ENCODE measurements at regions of chr10 and their contacts with region 1.

Region 1: DNA sequence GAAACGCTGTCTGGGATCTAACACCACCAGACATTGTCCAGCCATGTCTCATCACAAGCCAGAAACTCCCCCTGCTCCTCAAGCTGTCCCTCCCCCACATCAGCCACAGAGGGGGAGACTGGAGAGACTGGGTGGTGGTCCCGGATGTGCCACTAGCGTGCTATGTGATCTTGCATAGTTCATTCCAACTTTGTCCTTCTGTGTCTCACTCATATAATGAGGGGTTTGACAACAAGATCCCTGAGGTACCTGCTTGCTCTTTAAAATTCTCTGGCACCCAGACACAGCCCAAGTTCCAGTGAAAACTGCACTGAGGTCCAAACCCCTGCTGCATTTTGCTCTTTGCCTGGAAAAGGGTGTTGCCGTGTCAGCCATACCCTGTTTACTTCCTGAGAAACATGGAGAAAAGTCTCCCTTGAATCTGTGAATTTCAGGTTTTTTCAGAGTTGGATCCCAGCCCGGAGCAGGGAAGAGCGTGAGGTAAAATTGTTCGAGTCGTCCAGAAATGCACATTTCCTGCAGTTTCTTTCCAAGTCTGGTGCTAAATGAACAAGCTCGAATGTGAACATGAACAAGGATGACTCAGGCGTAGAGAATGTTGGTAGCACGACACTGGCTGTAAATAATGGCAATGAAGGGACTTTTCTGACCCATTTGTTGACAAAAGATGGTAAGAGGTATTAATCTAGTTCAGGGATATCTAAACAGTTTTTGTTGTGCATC is 156.5 kb downstream of the CCDC3 start:
- DNase-seq: peak; percentile 98
- H3K4me3 ChIP-seq: peak overlapping the region in 1 of 3 experiments; percentile 12
- H3K27ac ChIP-seq: peak overlapping the region; percentile 96
- H3K4me1 ChIP-seq: peaks cover 31% of the 10 kb centered on the region
- H3K27me3 ChIP-seq: no peaks in the 10 kb centered on the region
- CTCF ChIP-seq: no peak
- POLR2A ChIP-seq: peak; percentile 56

Region 2: DNA sequence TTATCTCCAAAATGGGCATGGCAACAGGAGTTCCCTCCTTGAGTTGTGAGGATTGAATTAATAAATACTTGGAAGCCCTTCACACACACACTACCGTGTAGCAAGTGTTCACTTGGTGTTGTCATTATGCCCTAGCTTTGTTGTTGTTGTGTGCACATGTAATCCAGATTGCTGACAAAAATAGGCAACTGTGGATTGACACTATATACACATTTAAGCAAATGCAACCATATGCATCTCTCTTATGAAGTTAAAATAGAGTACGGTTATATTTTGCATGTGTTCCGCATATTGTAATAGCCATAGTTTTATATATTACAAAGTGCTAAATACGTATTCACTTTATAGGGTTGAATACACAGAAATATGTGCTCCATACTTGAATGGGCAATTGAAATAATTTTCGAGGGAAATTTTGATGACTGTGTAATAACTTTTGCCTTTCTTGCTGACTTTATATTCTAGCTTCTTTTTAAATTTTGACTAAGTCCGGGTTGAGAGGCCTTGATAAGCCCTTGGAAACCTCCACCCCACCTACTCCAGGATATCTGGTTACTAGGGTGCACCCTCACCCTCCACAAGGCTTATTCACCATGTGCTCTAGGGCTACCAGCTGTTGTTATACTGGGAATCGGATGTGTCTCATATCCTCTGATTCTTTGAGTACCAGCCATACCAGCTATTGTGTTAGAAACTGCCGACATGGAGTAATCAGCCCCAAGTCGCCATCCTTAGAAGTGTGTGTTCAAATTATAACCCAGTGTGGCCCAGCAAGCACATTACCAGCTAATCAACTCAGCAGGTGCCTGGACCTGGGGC is 230.6 kb before region 1 on chr10:
- CTCF ChIA-PET with region 1: no interaction called
- POLR2A ChIA-PET with region 1: no interaction called
- dilution Hi-C with region 1: no loop called
- intact Hi-C with region 1: loop called (anchors 1 kb)
- DNase-seq: peak; percentile 74
- H3K4me3 ChIP-seq: no peak overlapping the region
- H3K27ac ChIP-seq: peak overlapping the region; percentile 85
- H3K4me1 ChIP-seq: peaks cover 12% of the 10 kb centered on the region
- H3K27me3 ChIP-seq: no peaks in the 10 kb centered on the region
- CTCF ChIP-seq: no peak
- POLR2A ChIP-seq: no peak

Region 3: GRCh38 chr10:12720217-12720981 is 124.6 kb before region 1 on chr10:
- CTCF ChIA-PET with region 1: no interaction called
- POLR2A ChIA-PET with region 1: interaction called, 5 read pairs
- dilution Hi-C with region 1: no loop called
- intact Hi-C with region 1: loop called (anchors 1 kb)
- DNase-seq: peak; percentile 96
- H3K4me3 ChIP-seq: no peak overlapping the region
- H3K27ac ChIP-seq: peak overlapping the region; percentile 65
- H3K4me1 ChIP-seq: peaks cover 23% of the 10 kb centered on the region
- H3K27me3 ChIP-seq: no peaks in the 10 kb centered on the region
- CTCF ChIP-seq: no peak
- POLR2A ChIP-seq: peak; percentile 37

Region 4: DNA sequence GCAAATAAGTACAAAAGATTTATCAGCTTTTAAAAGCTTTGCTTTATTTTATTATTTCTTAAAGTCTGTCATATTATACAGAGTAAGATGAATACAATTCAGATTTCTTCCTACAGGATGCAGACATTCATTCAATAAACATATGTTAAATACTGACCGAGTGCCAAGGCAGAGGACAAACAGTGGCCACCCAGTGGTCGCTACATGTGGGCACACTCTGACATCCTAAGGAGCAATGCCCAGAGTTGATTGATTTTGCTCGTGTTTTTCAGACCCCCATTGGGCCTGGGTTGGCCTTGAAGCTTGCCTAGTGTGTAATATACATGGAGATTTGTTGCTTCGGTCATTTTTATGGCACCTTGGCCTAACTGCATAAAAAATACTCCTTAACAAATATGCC is 44.7 kb before region 1 on chr10:
- CTCF ChIA-PET with region 1: no interaction called
- POLR2A ChIA-PET with region 1: no interaction called
- dilution Hi-C with region 1: no loop called
- intact Hi-C with region 1: loop called (anchors 5 kb)
- DNase-seq: peak; percentile 8
- H3K4me3 ChIP-seq: no peak overlapping the region
- H3K27ac ChIP-seq: no peak overlapping the region
- H3K4me1 ChIP-seq: peaks cover 6% of the 10 kb centered on the region
- H3K27me3 ChIP-seq: peaks cover 0 to 1% of the 10 kb centered on the region in 2 experiments
- CTCF ChIP-seq: peak in 1 of 2 donors; percentile 11
- POLR2A ChIP-seq: no peak

Region 5: DNA sequence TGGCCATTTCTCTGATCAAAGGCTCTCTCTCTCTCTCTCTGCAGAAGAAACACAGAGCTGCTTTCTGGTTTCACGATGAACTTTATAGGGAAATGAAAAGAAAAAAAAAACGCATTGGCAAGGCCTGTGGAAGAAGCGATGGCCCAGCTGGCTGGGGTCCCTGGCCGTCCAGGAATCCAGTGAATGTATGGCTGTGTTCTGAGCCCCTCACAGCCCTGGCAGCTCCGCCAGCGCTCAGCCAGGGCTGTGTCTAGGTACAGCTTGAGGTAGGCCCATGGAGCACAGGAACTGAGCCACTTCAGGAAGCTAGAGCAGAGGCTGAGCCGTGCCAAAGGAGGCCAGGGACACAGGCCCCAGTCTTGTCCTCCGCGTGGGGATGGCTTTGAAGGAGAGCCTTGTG is 402.3 kb after region 1 on chr10:
- CTCF ChIA-PET with region 1: no interaction called
- POLR2A ChIA-PET with region 1: no interaction called
- dilution Hi-C with region 1: no loop called
- intact Hi-C with region 1: no loop called
- DNase-seq: no peak
- H3K4me3 ChIP-seq: no peak overlapping the region
- H3K27ac ChIP-seq: no peak overlapping the region
- H3K4me1 ChIP-seq: no peaks in the 10 kb centered on the region
- H3K27me3 ChIP-seq: no peaks in the 10 kb centered on the region
- CTCF ChIP-seq: no peak
- POLR2A ChIP-seq: no peak

Measured in endothelial cell of umbilical vein (primary cell).